Psoas muscle (tissue), 8 donors: ENCODE measurements at regions of chr9 and their contacts with region 1.

Region 1: DNA sequence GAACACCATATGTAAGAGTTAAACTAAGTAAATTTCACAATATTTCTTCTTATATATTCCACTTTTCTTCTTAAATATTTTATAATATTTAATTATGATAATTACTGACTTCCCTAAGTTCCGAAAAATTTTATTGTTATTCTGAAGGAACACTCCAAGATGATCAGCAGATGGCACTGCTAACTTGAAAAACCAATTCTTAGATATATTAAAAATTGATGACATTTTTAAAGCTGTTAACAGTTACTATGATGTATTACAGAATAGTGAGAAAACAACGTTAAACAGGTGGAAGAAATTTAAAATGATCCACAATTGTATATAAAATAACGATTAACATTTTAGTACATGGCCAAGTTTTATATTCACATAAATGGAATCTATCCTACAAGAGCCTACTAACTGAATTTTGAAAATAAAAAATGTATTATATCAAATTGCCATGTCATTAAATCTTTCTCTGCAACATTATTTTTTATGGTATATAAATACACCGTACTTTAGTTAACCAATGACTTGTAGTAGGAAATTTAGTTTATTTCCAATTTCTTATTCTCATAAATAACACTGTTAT is 30.1 kb upstream of the MUSK start:
- DNase-seq: no peak
- ATAC-seq: no peak
- H3K4me3 ChIP-seq: no peak overlapping the region
- H3K27ac ChIP-seq: no peak overlapping the region
- H3K4me1 ChIP-seq: no peaks in the 10 kb centered on the region
- H3K27me3 ChIP-seq: no peaks in the 10 kb centered on the region
- CTCF ChIP-seq: peak; percentile 39

Region 2: DNA sequence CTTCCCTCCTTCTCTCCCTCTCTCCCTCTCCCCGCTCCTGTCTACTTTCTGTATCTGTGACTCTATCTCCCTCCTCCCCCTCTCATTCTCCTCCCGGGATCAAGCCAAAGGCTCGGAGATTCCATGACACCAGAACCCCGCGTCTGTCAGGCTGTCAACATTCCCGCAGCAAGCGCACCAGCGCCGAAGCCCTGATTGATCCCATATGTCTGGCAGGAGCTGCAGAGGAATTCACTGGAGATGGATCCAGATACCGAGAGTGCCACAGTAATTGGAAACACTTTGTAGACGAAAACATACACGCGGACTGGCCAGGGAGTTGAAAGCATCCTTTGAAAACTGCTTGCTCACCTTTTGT is 58.6 kb before region 1 on chr9:
- intact Hi-C with region 1: loop called in 1 of 2 experiments (anchors 10 kb)
- DNase-seq: peak in 1 of 2 donors; percentile 50
- ATAC-seq: peak; percentile 19 to 65 (median 24)
- H3K4me3 ChIP-seq: peak overlapping the region; percentile 62
- H3K27ac ChIP-seq: no peak overlapping the region
- H3K4me1 ChIP-seq: no peaks in the 10 kb centered on the region
- H3K27me3 ChIP-seq: peaks cover 3 to 39% (median 10%) of the 10 kb centered on the region in 3 donors
- CTCF ChIP-seq: no peak

Region 3: DNA sequence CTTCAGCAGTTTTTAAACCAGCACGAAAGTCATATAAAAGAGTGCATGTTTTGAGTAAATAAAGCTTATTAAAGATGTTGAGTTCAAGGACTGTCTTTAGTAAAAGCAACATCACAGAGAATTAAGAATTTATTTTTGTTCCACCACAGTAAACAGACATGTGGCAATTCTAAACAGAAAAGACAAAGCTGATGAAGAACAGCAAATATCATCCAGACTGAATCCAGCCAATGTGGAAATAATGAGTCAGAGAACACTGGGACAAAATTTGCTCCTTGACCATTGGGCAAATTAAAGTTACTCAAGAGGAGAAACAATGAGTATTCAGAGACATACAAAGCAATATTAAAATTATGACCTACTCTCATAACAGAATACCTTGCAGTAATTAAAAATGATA is 662.7 kb after region 1 on chr9:
- intact Hi-C with region 1: loop called in 1 of 2 experiments (anchors 5 kb)
- DNase-seq: no peak
- ATAC-seq: peak in 1 of 4 donors; percentile 32
- H3K4me3 ChIP-seq: no peak overlapping the region
- H3K27ac ChIP-seq: no peak overlapping the region
- H3K4me1 ChIP-seq: no peaks in the 10 kb centered on the region
- H3K27me3 ChIP-seq: no peaks in the 10 kb centered on the region
- CTCF ChIP-seq: no peak